GM10248 (cell line): ENCODE measurements at regions of chr1 and their contacts with region 1.

Region 1: GRCh38 chr1:24459551-24460266 is 42.9 kb upstream of the RCAN3 start:
- DNase-seq: no peak
- CTCF ChIP-seq: no peak

Region 2: GRCh38 chr1:24228311-24228710 is 231.4 kb before region 1 on chr1:
- CTCF ChIA-PET with region 1: no interaction called
- POLR2A ChIA-PET with region 1: no interaction called
- DNase-seq: no peak
- CTCF ChIP-seq: no peak

Region 3: DNA sequence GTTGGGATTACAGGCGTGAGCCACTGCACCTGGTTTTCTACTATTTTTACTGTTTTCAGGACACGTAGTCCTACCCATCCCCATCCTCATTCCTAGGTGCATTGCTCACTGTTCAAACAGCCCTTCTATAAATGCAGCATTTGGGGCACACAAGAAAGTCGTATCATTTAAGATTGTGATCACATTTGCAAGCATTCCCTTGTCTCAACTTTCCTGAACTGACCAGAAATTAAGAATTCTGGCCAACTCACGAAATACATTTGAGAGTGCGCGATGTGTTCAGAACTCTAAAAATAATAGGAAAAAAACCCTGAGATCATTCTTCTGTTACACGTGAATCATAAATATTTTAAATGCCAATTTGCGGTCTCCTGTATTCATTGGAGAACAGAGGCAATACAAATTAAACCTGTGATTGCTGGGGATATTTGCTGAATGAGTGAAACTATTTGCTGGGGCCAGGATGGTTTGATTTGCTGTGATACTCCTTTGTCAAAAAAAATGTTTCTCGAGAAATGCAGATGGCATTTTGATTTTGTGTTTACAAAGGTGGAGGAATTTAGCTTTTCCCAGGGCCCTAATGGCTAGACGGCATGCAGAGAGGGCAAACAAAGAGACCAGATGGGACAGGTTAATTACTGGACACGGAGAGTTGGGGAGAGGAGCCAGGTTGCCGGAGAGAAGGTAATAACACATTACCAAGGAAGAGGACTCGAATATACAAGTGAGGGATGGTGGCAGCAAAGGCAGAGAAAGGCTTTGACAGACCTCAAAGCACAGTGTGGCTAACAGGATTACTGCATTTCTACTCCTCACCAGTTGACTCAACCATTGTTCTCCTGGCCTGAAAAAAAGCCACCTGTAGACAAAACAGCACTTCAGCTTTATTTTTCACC is 84.6 kb before region 1 on chr1:
- CTCF ChIA-PET with region 1: no interaction called
- POLR2A ChIA-PET with region 1: no interaction called
- DNase-seq: no peak
- CTCF ChIP-seq: no peak

Region 4: GRCh38 chr1:24385160-24385940 is 74.4 kb before region 1 on chr1:
- CTCF ChIA-PET with region 1: no interaction called
- POLR2A ChIA-PET with region 1: no interaction called
- DNase-seq: no peak
- CTCF ChIP-seq: peak; percentile 44

Region 5: GRCh38 chr1:24403806-24404205 is 55.9 kb before region 1 on chr1:
- CTCF ChIA-PET with region 1: no interaction called
- POLR2A ChIA-PET with region 1: no interaction called
- DNase-seq: no peak
- CTCF ChIP-seq: no peak

Region 6: DNA sequence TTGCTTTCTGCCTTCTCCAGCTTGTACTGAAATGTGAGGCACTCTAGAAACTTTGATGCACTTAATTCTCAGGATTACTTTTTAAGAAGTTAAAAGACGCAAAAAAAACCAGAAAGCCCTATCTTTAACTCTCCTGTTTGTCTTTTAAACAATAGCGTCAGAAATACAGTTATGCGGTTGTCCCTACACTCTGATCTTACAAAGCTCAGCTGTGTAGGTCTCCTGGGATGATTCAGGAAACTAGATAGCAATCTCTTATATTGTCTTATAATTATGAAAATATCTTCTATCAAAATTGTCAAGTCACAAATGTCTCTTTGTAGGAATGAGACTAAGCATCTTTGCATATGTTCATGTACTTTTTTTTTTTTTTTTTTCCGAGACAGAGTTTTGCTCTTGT is 16.0 kb after region 1 on chr1:
- CTCF ChIA-PET with region 1: interaction called, 10 read pairs
- POLR2A ChIA-PET with region 1: no interaction called
- DNase-seq: no peak
- CTCF ChIP-seq: no peak